ENCODE measurements at regions of chr5 and their contacts with region 1.

Region 1: DNA sequence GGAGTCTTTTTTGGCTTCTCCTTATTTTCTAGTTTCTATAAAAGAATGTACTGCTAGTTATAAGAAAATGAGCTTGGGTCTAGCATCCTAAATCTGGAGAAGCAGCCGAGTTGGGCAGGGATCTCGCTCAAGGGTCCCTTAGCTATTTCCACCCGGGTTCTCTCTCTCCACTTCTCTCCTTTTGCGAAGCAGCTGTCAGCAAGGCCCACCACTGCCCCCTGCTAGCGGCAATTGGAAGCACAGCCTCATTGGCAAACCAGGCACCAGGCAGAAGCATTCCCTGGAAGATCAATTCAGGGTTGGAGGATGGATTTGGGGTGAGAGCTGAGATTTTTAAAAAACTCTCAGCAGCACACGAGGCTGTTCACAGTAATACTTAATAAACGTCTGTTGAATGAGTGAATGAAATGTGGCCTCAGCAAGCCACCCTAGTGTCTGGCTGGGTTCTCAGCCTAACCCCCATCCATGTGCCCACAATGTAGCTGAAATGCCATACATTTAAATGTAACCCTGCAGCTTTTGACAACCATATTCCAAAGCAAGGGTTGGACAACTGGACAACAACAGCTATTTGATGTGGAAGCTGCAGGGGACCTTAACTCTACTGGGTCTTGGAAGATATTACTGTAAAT is 34.6 kb upstream of the TNIP1 start:
- DNase-seq: no peak
- H3K4me3 ChIP-seq: no peak overlapping the region
- H3K27ac ChIP-seq: no peak overlapping the region
- H3K4me1 ChIP-seq: peaks cover 0 to 28% (median 0%) of the 10 kb centered on the region in 3 donors
- H3K27me3 ChIP-seq: no peaks in the 10 kb centered on the region
- CTCF ChIP-seq: peak; percentile 88 to 95 (median 94)
- POLR2A ChIP-seq: no peak

Region 2: DNA sequence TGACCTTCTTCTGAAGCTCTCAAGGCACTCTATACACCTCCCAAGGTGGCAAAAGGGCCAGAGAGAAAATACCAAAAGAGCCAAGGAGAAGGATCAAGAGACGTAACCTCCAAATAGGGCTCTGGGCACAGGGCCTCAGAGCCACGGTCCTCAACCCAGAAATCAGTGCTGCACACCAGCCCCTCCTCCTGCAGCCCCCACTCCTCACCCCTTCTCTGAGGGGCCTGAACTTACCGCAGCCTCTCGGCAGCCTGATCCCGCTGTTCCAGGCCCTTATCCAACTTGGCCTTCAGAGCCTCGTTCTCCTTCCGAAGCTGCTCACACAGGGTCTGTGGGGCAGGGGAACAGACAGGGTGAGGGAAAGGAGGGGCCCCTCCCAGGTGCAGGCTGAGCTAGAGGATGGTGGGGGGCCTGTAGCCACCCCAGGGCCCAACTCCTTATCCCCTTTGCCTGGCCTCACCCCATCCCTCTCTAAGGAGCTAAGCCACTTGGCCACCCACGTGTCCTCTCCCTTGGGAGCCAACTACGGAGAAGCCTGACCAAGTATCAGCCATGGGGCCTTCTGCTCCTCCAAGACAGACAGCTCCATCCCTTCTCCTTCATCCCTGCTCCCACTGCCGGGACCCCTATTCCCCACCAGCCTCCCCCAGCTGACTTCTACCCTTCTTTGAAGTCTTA is 63.3 kb before region 1 on chr5:
- intact Hi-C with region 1: loop called (anchors 2 kb)
- DNase-seq: no peak
- H3K4me3 ChIP-seq: no peak overlapping the region
- H3K27ac ChIP-seq: peak overlapping the region; percentile 16 to 40 (median 28)
- H3K4me1 ChIP-seq: peaks cover 0 to 23% (median 5%) of the 10 kb centered on the region in 3 donors
- H3K27me3 ChIP-seq: no peaks in the 10 kb centered on the region
- CTCF ChIP-seq: no peak
- POLR2A ChIP-seq: no peak